AG04449 (cell line): ENCODE measurements at regions of chr2 and their contacts with region 1.

Region 1: DNA sequence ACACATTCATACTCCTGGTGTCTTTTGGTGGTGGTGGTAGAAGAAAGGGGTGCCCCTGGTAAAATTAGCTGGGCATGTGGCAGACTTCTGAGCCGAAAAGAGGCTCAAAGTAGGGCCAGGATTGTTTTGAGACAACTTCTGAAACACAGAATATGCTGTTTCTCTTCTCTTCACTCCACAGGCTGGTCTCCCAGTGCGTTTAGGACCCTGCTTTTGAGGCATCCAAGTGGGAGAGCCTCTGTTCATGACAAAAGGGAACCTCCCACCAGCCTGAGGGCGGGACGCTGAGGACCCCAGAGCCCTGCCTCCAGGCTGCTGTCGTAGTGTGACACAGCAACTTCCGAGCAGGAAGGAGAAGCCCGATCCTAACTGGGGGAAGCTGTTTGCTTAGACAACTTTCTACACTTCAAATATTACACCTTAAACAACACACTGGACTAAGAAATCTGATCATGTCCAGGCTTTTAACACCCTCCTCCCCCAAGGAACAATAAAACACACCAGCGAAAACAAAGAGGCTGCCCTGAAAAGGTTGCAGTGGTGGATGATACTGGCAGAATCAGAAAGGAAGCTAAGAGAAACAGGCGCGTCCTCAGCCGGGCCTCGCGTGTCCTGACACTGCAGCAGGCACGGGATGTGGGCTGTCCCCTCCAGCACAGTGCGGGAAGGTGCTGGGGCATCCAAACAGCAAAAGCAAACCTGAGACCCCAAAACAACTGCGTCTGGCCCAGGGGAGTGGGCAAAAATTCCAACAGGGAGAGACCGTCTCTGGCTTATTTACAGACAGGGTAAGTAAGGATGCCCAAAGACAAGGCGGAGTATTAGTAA is 9.3 kb downstream of the SERTAD2 start:
- DNase-seq: no peak
- H3K4me3 ChIP-seq: peak overlapping the region; percentile 57
- CTCF ChIP-seq: no peak

Region 2: DNA sequence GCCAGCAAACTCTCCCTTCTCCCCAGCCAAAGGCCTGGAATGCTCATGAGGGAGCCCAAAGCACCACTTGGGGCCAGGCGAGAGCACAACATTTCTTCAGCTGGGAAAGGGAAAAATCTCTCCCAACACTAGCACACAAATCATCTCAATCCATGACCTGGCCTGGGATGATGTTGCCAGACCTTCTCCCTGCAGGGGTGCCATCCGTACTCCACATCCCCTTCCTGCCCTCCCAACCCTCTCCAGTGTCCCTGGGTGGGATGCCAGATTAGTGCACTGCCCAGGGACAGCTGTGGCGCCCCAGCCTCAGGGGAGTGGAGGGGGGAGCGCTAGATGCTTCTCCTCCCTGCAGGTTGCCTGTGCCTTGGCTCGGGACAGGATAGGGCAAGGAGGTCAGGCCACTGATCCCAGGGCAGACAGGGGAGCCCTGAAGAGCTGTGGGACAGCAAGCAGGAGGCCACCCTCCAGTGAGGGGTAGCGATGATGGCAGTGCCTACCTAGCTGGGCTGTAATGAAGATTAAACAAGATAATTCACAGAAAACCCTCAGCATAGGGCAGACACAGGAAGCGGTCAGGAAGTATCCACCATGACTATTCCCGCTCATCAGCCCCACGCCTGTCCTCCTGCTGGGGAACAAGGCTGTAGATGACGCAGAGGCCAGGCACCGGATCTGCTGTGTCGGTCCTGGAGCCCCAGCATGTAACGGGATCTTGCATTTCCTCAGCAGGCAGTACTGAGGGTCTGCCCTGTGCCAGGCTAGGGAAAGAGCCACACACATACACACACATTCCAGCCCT is 21.7 kb before region 1 on chr2:
- CTCF ChIA-PET with region 1: interaction called, 11 read pairs
- POLR2A ChIA-PET with region 1: no interaction called
- DNase-seq: no peak
- H3K4me3 ChIP-seq: no peak overlapping the region
- CTCF ChIP-seq: peak; percentile 29

Region 3: DNA sequence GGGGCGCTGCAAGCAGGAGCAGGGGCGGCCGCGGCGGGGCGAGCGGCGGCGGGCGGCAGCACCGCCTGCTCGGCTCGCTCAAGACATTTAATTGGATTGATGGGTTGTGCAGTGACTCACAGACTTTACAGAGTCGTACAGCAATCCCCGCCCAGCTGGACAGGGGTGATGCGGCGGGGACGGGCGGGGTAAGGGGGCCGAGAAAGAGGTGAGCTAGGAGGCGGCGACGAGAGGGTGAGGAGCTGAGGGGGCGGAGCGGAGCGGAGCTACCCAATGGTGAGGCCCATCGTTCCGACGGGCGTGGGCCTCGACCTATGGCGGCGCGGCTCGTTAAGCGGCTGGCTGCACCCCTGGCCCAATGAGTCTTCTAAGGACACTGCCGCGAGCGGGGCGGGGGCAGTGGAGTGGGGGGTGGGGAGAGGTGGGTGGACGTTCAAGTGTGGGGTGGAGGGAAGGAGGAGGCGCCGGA is 106.5 kb after region 1 on chr2:
- CTCF ChIA-PET with region 1: interaction called, 53 read pairs
- POLR2A ChIA-PET with region 1: interaction called, 6 read pairs
- DNase-seq: peak; percentile 97
- H3K4me3 ChIP-seq: peak overlapping the region; percentile 88
- CTCF ChIP-seq: peak; percentile 0

Region 4: DNA sequence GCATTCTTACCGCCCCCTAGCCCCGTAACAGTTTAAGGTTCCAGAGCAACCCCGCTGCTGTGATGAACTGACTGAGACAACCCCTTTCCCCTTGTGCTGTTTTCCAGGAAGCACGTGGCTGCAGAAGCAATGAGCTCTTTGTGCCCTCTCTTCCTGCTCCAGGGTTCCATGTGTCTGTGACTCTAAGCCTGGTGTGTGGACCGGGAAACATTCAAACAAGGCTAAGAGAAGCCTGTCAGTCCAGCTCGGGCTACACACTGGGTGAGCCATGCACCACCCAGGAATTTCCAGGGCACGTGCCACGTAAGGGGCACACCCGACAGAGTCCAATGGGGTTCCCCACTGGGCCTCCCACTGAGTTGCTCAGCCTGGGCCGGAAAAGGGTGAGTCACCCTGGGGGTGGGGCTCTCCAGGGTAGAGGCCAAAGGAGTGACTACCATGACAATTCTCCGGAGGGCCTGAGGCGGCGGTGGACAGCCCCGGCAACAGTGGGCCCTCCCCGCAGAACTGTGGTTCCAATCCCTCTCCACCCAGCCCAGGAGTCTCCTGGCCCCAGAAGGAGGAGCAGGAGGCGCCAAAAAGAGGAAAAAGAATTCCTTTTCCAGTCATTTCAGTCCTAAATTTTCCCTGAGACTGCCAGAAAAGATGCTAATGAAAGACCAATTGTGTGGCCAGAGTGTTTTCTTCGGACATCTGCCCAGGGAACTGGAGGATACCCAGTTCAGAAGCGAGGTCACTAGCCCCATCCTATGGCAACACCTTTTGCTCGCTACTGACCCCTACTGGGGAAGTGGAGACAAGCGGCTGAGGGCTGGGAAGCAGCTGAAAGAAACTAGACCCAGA is 187.0 kb after region 1 on chr2:
- CTCF ChIA-PET with region 1: interaction called, 10 read pairs
- POLR2A ChIA-PET with region 1: no interaction called
- DNase-seq: peak; percentile 65
- H3K4me3 ChIP-seq: no peak overlapping the region
- CTCF ChIP-seq: peak; percentile 77

Region 5: GRCh38 chr2:64859312-64860212 is 215.2 kb after region 1 on chr2:
- CTCF ChIA-PET with region 1: interaction called, 37 read pairs
- POLR2A ChIA-PET with region 1: interaction called, 4 read pairs
- DNase-seq: peak; percentile 80
- H3K4me3 ChIP-seq: peak overlapping the region; percentile 42
- CTCF ChIP-seq: no peak

Region 6: GRCh38 chr2:64873472-64873924 is 229.1 kb after region 1 on chr2:
- CTCF ChIA-PET with region 1: interaction called, 128 read pairs
- POLR2A ChIA-PET with region 1: no interaction called
- DNase-seq: no peak
- H3K4me3 ChIP-seq: no peak overlapping the region; the same call in 1 of the 2 replicates
- CTCF ChIP-seq: peak; percentile 97